CD8-positive, alpha-beta memory T cell (primary cell): ENCODE measurements at regions of chr12 and their contacts with region 1.

Region 1: GRCh38 chr12:1605129-1606020 is 11.0 kb upstream of the FBXL14 start:
- DNase-seq: peak; percentile 19 to 69 (median 53)
- H3K4me3 ChIP-seq: peak overlapping the region; percentile 54
- H3K4me3 Mint-ChIP-seq: peak overlapping the region; percentile 17 to 88 (median 79)
- H3K27ac ChIP-seq: peak overlapping the region; percentile 51
- H3K27ac Mint-ChIP-seq: peak overlapping the region in 7 of 8 donors; percentile 17 to 87 (median 52)
- H3K4me1 ChIP-seq: peaks cover 17% of the 10 kb centered on the region
- H3K4me1 Mint-ChIP-seq: peaks cover 27 to 41% (median 37%) of the 10 kb centered on the region in 3 donors
- H3K27me3 ChIP-seq: no peaks in the 10 kb centered on the region
- H3K27me3 Mint-ChIP-seq: peaks cover 2 to 3% of the 10 kb centered on the region in 2 donors

Region 2: DNA sequence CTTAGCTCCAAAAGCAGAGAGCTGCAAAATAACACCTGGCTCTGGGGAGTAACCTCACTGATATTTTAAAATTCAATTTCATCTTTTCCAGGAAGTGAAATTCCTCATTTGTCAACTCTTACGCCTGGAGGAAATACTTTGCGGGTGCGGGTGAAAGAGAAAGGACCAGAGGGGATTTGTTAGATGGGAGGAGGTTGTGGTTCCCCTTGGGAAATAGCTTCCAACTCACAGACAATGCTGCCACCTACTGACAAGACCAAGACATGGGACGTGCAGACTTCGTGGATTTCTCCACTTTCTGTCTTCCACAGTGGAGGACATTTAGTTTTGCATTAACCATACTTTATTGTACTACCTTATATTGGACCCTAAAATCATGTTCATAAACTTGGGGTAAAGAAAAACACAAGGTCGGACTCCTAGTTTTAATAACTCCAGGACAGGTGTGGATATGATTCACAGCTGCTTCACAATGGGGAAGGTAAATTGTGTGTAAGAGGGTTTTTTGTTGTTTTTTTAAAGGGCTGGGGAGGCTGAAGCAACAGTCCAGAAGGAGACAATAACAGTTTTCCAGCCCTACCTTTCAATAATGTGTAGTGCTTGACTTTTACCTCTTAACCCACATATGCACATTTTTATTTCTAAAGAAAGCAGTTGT is 21.8 kb before region 1 on chr12:
- CTCF ChIA-PET with region 1: interaction called, 27 read pairs
- POLR2A ChIA-PET with region 1: interaction called, 3 read pairs
- DNase-seq: peak; percentile 33 to 78 (median 63)
- H3K4me3 ChIP-seq: no peak overlapping the region
- H3K4me3 Mint-ChIP-seq: peak overlapping the region in 4 of 7 donors; percentile 25 to 57 (median 34)
- H3K27ac ChIP-seq: no peak overlapping the region
- H3K27ac Mint-ChIP-seq: peak overlapping the region in 7 of 8 donors; percentile 8 to 80 (median 31)
- H3K4me1 ChIP-seq: peaks cover 19% of the 10 kb centered on the region
- H3K4me1 Mint-ChIP-seq: peaks cover 17 to 21% (median 18%) of the 10 kb centered on the region in 3 donors
- H3K27me3 ChIP-seq: no peaks in the 10 kb centered on the region
- H3K27me3 Mint-ChIP-seq: no peaks in the 10 kb centered on the region

Region 3: DNA sequence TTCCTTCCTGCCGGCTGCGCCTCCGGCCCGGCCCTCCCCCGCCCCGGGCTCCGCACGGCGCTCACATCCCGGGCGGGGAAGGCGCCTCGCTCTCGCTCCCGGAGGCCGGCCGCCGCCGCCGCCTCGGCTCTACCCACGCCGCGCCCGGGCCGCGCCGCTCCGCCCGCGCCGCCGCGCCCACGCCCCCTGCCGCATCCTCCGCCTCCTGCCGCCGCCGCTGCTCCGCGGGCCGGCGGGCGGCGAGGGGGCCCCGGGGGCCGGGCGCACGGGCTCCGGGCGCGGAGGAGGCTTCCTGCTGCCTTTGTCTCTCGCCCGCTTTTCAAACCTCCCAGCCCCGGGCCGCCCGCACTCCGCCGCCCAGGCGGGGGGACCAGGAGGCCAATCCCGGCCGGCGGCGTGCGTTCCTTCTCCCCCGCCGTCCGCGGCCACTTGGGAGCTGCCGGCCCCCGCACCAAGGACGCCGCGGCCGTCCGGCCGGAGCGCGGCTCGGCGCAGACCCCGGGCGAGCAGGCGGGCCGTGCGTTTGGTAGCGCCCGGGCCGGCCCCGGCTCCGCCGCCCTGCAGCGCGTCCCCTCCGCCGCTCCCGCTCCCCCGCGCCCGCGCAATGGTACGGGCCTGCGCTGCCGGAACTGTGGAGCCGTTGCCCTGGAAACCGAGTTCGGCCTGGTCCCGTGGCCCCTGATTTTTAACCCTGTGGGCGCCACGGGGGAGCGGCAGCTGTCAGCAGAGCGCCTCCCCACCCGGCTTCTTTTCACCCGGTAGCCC is 10.9 kb before region 1 on chr12 and contains the start of gene FBXL14:
- CTCF ChIA-PET with region 1: interaction called, 36 read pairs
- POLR2A ChIA-PET with region 1: interaction called, 32 read pairs
- DNase-seq: peak; percentile 86 to 95 (median 91)
- H3K4me3 ChIP-seq: peak within 1 kb of the TSS; percentile 95
- H3K4me3 Mint-ChIP-seq: peak within 1 kb of the TSS; percentile 92 to 98 (median 95)
- H3K27ac ChIP-seq: peak within 1 kb of the TSS; percentile 84
- H3K27ac Mint-ChIP-seq: peak within 1 kb of the TSS; percentile 90 to 98 (median 95)
- H3K4me1 ChIP-seq: peaks cover 32% of the 10 kb centered on the region
- H3K4me1 Mint-ChIP-seq: peaks cover 50 to 52% (median 51%) of the 10 kb centered on the region in 3 donors
- H3K27me3 ChIP-seq: no peaks in the 10 kb centered on the region
- H3K27me3 Mint-ChIP-seq: peaks cover 0 to 4% of the 10 kb centered on the region in 2 donors
- total RNA-seq, gene FBXL14: 20.5 to 22.1 TPM

Region 4: DNA sequence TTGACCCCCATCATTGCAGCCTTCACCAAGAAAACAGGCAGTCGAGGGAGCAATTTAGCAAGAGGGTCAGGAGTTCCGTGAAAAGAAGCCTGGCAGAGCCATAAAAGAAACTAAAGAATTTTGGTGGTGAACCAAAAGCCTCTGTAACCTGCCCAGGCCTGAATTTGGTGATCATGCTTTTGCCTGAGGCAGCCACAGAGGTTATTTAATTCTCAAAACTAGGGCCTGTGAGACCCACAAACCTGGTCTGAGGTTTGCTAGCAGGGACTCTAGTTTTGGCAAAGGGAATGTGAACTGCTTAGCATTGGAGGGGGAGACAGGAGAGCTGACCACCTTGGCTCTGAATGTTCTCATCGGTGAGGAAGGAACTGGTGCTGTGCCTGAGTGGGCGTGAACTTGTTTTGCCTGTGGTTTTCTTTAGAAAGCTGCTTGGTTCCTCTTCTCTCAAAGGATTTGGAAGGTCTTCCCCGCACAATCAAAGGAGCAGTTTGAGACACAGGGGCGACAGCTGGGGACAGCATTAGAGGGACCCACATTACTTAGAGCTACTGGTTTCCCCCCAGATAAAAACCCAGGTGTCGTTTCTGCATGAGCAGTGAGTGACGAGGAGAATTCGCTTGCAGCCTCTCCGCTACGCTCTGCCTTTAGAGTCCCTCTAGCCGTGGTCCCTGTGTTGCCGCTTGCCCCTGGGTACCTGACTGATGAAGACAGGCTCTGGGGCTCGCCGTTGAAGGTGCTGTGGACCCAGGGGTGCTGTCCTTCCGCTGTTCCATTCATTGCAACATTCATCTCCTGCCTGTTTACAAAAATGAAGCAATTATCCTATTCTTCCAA is 11.1 kb after region 1 on chr12:
- CTCF ChIA-PET with region 1: interaction called, 12 read pairs
- POLR2A ChIA-PET with region 1: no interaction called
- DNase-seq: no peak
- H3K4me3 ChIP-seq: no peak overlapping the region
- H3K4me3 Mint-ChIP-seq: no peak overlapping the region
- H3K27ac ChIP-seq: no peak overlapping the region
- H3K27ac Mint-ChIP-seq: no peak overlapping the region
- H3K4me1 ChIP-seq: no peaks in the 10 kb centered on the region
- H3K4me1 Mint-ChIP-seq: no peaks in the 10 kb centered on the region
- H3K27me3 ChIP-seq: no peaks in the 10 kb centered on the region
- H3K27me3 Mint-ChIP-seq: peaks cover 14 to 29% of the 10 kb centered on the region in 2 donors

Region 5: DNA sequence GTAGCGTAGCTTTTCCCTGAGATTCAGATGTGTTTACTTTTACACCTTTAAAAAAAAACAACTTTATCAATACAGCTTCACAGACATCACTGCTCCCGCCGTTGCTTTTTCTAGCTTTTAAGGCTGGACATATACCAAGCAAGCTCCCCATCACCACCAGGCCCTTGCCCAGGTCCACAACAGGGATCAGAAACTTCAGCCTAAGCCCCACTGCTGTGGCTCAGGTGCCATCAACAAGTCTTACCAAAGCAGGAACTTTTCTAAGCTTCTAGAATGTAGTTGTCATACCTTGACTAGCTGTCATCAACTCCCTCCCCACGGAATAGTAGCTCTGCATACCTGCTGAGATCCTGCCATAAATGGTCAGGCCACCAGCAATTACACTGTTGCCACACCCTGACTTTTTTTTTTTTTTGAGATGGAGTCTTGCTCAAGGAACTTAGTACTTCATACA is 65.5 kb after region 1 on chr12:
- CTCF ChIA-PET with region 1: no interaction called
- POLR2A ChIA-PET with region 1: no interaction called
- DNase-seq: no peak
- H3K4me3 ChIP-seq: no peak overlapping the region
- H3K4me3 Mint-ChIP-seq: peak overlapping the region in 1 of 7 donors; percentile 35
- H3K27ac ChIP-seq: no peak overlapping the region
- H3K27ac Mint-ChIP-seq: peak overlapping the region in 3 of 8 donors; percentile 39 to 60 (median 58)
- H3K4me1 ChIP-seq: peaks cover 27% of the 10 kb centered on the region
- H3K4me1 Mint-ChIP-seq: peaks cover 34 to 53% (median 41%) of the 10 kb centered on the region in 3 donors
- H3K27me3 ChIP-seq: no peaks in the 10 kb centered on the region
- H3K27me3 Mint-ChIP-seq: no peaks in the 10 kb centered on the region

Region 6: GRCh38 chr12:1966561-1967226 is 361.3 kb after region 1 on chr12:
- CTCF ChIA-PET with region 1: no interaction called
- POLR2A ChIA-PET with region 1: no interaction called
- DNase-seq: no peak
- H3K4me3 ChIP-seq: no peak overlapping the region
- H3K4me3 Mint-ChIP-seq: no peak overlapping the region
- H3K27ac ChIP-seq: no peak overlapping the region
- H3K27ac Mint-ChIP-seq: no peak overlapping the region
- H3K4me1 ChIP-seq: no peaks in the 10 kb centered on the region
- H3K4me1 Mint-ChIP-seq: peaks cover 6 to 14% (median 7%) of the 10 kb centered on the region in 3 donors
- H3K27me3 ChIP-seq: no peaks in the 10 kb centered on the region
- H3K27me3 Mint-ChIP-seq: no peaks in the 10 kb centered on the region